Endothelial cell of umbilical vein (primary cell): ENCODE measurements at regions of chr16 and their contacts with region 1.

Region 1: GRCh38 chr16:84726079-84726668 is 26.4 kb downstream of the USP10 start:
- DNase-seq: peak; percentile 82
- H3K4me3 ChIP-seq: no peak overlapping the region
- H3K27ac ChIP-seq: no peak overlapping the region
- H3K4me1 ChIP-seq: peaks cover 62% of the 10 kb centered on the region
- H3K27me3 ChIP-seq: no peaks in the 10 kb centered on the region
- CTCF ChIP-seq: peak; percentile 88 to 95
- POLR2A ChIP-seq: no peak

Region 2: DNA sequence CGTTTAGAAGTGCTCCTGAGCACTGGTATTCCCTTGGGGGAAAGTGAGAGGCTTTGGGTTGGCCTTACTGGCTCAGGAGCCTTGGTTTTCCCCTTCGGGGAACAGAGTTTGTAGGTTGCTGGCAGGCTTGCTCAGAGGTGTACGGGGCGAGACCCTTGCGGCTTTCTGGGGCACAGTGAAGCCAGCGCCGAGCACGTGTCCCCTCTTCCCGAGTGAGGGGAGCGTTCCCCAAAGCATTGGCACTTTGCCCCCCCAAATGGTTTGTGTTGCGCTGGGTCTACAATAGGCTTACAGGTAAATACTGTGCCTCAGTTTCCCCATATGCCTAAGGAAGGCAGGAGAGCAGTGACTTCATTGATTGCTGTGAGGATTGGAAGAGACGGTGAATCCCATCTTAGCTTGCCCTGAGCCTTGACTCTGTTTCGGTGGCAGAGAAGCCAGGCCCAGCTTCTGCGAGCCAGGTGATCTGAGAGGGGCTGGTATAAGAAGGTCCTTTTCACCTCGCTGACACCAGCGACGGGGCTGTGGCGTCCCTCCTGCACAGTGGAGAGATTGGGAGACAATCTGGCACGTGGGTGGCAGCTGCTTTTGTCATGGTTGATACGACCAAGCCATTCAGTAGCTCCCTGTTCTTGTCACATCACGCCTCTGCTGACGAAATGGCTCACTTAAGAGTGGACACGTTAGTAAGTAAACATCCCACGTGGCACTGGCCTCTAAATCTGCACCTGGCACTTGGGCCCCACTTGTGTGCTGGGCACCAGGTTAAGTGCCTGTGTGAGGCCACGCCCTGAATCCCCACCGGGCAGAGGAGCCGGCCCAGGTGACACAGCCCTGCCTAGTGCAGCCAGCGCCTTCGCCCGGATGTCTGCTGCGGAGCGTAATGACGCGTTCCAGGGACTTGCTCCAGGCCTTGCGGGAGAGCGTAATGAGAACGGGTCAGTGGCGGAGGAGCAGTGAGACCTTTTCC is 276.7 kb before region 1 on chr16:
- CTCF ChIA-PET with region 1: no interaction called
- POLR2A ChIA-PET with region 1: no interaction called
- dilution Hi-C with region 1: no loop called
- intact Hi-C with region 1: no loop called
- DNase-seq: no peak
- H3K4me3 ChIP-seq: no peak overlapping the region
- H3K27ac ChIP-seq: no peak overlapping the region
- H3K4me1 ChIP-seq: no peaks in the 10 kb centered on the region
- H3K27me3 ChIP-seq: peaks cover 0 to 2% of the 10 kb centered on the region in 2 experiments
- CTCF ChIP-seq: no peak
- POLR2A ChIP-seq: no peak

Region 3: GRCh38 chr16:84511180-84511824 is 214.9 kb before region 1 on chr16:
- CTCF ChIA-PET with region 1: interaction called, 30 read pairs
- POLR2A ChIA-PET with region 1: interaction called, 3 read pairs
- dilution Hi-C with region 1: no loop called
- intact Hi-C with region 1: loop called (anchors 1 kb)
- DNase-seq: peak; percentile 87
- H3K4me3 ChIP-seq: no peak overlapping the region
- H3K27ac ChIP-seq: no peak overlapping the region
- H3K4me1 ChIP-seq: peaks cover 3% of the 10 kb centered on the region
- H3K27me3 ChIP-seq: no peaks in the 10 kb centered on the region
- CTCF ChIP-seq: peak; percentile 86 to 92
- POLR2A ChIP-seq: no peak

Region 4: GRCh38 chr16:84548971-84549844 is 177.0 kb before region 1 on chr16:
- CTCF ChIA-PET with region 1: no interaction called
- POLR2A ChIA-PET with region 1: no interaction called
- dilution Hi-C with region 1: no loop called
- intact Hi-C with region 1: no loop called
- DNase-seq: peak; percentile 62
- H3K4me3 ChIP-seq: no peak overlapping the region
- H3K27ac ChIP-seq: peak overlapping the region; percentile 78
- H3K4me1 ChIP-seq: peaks cover 18% of the 10 kb centered on the region
- H3K27me3 ChIP-seq: no peaks in the 10 kb centered on the region
- CTCF ChIP-seq: no peak
- POLR2A ChIP-seq: peak; percentile 34

Region 5: DNA sequence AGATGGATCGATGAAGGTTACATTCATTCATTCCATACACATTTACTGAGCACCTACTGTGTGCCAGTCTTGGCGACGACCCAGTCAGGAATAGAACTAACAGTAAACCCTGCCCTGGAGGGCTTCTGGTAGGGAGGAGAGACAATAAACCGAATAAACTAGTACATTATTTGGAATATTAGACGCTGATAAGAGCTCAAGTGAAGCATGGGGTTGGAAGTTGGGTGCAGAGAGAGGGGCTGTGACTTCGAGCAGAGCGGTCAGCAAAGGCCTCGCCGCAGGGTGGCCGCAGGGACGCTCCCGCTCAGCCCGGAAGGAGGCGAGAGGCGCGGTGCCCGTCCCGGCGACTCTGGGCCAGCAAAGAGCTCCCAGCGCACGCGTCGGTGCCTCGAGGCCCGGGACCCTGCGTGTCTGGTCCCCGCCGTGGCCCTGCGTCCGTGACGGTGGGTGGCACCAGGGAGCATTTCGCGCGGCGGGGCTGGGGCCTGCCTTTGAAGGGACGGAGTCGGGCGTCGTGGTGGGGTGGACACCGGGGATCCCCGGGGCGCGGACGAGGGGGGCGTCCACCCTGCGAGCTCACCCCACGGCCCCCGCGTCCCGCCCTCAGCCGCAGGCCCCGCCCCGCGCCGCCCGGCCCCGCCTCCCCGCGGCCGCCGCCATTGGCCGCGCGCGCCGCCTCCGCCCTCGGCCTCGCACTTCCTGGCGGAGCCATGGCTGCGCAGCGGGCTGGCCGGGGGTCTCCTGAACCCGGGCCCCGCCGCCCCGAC is 78.2 kb before region 1 on chr16 and contains the start of gene KLHL36:
- CTCF ChIA-PET with region 1: interaction called, 15 read pairs
- POLR2A ChIA-PET with region 1: no interaction called
- dilution Hi-C with region 1: no loop called
- intact Hi-C with region 1: no loop called
- DNase-seq: peak; percentile 33
- H3K4me3 ChIP-seq: peak within 1 kb of the TSS; percentile 32 to 65 (median 40)
- H3K27ac ChIP-seq: no peak within 1 kb of the TSS
- H3K4me1 ChIP-seq: peaks cover 9% of the 10 kb centered on the region
- H3K27me3 ChIP-seq: peaks cover 3% of the 10 kb centered on the region in 2 experiments
- CTCF ChIP-seq: no peak
- POLR2A ChIP-seq: peak; percentile 43
- total RNA-seq, gene KLHL36: 33.3 and 38.8 TPM in 2 replicates

Region 6: GRCh38 chr16:84672276-84673202 is 53.6 kb before region 1 on chr16:
- CTCF ChIA-PET with region 1: interaction called, 135 read pairs
- POLR2A ChIA-PET with region 1: no interaction called
- dilution Hi-C with region 1: no loop called
- intact Hi-C with region 1: loop called (anchors 1 kb)
- DNase-seq: peak; percentile 72
- H3K4me3 ChIP-seq: no peak overlapping the region
- H3K27ac ChIP-seq: no peak overlapping the region
- H3K4me1 ChIP-seq: no peaks in the 10 kb centered on the region
- H3K27me3 ChIP-seq: peaks cover 2 to 3% of the 10 kb centered on the region in 2 experiments
- CTCF ChIP-seq: peak; percentile 93 to 97
- POLR2A ChIP-seq: no peak

Region 7: GRCh38 chr16:84699712-84700445 is 26.3 kb before region 1 on chr16 and contains the start of gene USP10:
- CTCF ChIA-PET with region 1: interaction called, 10 read pairs
- POLR2A ChIA-PET with region 1: no interaction called
- dilution Hi-C with region 1: no loop called
- intact Hi-C with region 1: loop called (anchors 2 kb)
- DNase-seq: peak; percentile 77
- H3K4me3 ChIP-seq: peak within 1 kb of the TSS; percentile 77 to 97 (median 93)
- H3K27ac ChIP-seq: peak within 1 kb of the TSS; percentile 69
- H3K4me1 ChIP-seq: peaks cover 14% of the 10 kb centered on the region
- H3K27me3 ChIP-seq: no peaks in the 10 kb centered on the region
- CTCF ChIP-seq: no peak
- POLR2A ChIP-seq: no peak
- total RNA-seq, gene USP10: 97.4 and 115 TPM in 2 replicates

Region 8: DNA sequence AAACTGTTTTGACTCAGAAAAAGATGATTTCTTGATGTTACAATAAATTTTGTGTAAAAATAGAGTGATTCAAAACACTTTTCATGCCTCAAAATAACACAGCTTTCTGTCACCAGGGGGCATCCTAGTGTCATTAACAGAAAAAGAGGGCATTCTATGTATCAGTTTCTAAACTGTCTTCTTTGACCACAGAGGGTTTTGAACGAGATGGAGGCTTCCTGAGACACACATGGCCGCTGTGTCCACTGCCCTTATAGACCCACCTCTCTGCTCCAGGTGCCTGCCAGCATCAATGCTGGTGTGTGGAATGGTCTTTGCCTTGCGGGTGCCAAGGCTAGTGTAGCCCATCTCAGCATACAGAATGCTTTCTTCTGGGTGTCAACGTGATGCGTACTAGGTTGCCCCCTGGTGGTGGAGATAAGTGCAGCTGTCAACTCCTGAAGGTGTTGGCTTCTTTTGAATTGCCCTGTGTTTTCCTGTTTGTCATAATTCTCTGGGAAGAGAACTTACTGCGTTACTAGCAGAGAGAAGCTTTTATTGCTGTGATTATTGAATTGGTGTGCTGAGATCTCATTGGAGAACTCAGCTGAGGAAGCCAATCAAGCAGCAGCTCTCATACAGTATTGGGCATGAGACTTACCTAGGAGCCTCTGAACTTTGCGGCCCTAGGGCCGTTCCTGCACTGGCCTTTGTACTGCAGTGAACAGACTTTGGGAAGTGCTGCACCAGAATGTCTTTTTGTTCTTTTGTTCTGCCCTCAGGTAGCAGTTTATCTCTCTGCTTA is 12.3 kb after region 1 on chr16:
- CTCF ChIA-PET with region 1: interaction called, 148 read pairs
- POLR2A ChIA-PET with region 1: no interaction called
- dilution Hi-C with region 1: no loop called
- intact Hi-C with region 1: loop called (anchors 1 kb)
- DNase-seq: peak; percentile 92
- H3K4me3 ChIP-seq: no peak overlapping the region
- H3K27ac ChIP-seq: no peak overlapping the region
- H3K4me1 ChIP-seq: peaks cover 28% of the 10 kb centered on the region
- H3K27me3 ChIP-seq: no peaks in the 10 kb centered on the region
- CTCF ChIP-seq: peak; percentile 88 to 92
- POLR2A ChIP-seq: no peak